ENCODE measurements at regions of chr1 and their contacts with region 1.

Region 1: DNA sequence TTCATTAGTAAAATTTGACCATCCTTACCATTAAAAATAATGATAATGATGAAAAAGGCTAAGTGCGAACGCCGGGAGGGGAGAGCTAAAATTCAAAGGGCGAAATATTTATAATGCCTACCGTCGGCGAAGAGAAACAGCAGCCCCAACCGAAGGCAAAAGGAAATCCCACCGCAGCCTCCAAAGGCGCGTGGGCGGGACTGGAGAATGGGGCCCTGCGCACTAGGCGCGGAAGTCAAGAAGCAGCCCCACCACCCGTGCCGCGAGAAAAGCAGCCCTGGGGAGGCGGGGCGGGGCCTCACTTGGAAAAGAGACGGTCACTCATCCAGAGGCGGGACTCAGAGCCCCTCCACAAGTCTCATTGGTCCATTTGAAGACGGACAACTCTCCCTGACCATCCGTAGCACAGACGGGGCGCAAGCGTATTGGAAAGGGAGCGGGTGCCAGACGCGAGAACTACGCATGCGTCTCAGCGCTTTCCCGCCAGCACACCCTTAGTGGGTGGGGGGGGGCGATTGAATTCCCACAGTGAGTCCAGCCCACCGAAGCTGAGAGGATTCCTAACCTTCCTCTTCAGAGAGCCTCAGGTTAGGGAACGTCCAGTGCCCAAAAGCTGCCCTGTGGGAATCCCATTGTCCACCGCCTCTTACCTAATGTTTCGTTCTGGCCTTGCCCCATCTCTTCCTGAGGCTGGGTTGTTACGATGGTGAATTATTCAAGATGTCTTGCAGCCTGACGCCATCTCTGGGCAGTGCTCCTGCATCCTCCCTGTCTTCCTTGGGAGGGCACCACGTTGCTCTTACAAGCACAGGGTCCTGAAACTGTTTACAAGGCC is 19.0 kb downstream of the MTX1 start:
- DNase-seq: peak; percentile 98 to 99
- H3K4me3 ChIP-seq: peak overlapping the region; percentile 49 to 84
- H3K27ac ChIP-seq: peak overlapping the region; percentile 87 to 96
- H3K4me1 ChIP-seq: no peaks in the 10 kb centered on the region
- H3K27me3 ChIP-seq: no peaks in the 10 kb centered on the region
- CTCF ChIP-seq: peak in 2 of 4 experiments; percentile 6 to 25
- POLR2A ChIP-seq: peak; percentile 73 to 81

Region 2: DNA sequence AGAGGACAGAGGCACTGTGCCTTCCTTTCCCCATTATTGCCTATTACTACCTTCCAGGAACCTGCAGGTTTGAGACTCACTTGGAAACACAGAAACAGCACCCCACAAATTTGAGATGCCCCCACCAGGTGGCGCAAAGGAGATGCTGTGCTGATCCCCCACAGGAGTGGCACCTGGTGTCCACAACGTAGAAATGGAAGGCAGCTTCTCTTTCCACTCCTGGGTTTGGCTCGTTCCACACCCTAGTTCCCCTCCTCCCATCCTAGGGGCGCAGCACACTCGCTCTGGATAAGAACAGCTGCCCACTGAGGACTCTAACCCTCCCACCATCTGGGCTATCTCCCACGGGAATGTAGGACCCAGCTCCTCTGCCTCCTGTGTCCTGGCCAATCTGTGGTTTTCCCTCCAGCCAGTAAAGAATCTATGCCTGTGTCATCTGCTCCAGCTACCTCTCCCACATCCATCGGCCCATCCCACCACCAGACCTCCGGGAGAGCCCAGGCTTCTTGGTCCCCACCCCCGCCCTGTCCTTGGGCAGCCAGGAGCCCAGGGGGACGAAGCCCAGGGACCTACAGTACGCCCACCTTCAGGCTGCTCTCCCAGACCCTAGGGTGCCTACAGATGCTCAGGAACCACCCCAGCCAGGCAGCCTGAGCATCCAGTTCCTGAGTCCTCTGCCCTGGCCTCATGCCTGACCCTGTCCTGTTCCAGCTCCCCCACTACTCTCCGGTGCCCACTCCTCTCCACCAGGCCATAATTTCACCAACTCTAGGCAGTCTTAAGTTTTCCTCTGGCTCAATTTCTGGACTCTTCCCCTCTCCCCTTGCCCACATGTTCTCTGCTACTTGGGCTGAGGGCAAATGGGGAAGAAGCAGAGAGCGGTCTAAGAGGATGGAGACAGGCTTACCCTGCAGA is 20.3 kb before region 1 on chr1:
- intact Hi-C with region 1: loop called (anchors 1 kb)
- DNase-seq: peak; percentile 86 to 87
- H3K4me3 ChIP-seq: peak overlapping the region; percentile 62 to 76
- H3K27ac ChIP-seq: peak overlapping the region; percentile 99
- H3K4me1 ChIP-seq: no peaks in the 10 kb centered on the region
- H3K27me3 ChIP-seq: no peaks in the 10 kb centered on the region
- CTCF ChIP-seq: peak; percentile 85 to 94 (median 88)
- POLR2A ChIP-seq: peak in 1 of 2 donors; percentile 36

Measured in uterus (tissue), 4 donors.